ENCODE measurements at regions of chr1 and their contacts with region 1.

Region 1: DNA sequence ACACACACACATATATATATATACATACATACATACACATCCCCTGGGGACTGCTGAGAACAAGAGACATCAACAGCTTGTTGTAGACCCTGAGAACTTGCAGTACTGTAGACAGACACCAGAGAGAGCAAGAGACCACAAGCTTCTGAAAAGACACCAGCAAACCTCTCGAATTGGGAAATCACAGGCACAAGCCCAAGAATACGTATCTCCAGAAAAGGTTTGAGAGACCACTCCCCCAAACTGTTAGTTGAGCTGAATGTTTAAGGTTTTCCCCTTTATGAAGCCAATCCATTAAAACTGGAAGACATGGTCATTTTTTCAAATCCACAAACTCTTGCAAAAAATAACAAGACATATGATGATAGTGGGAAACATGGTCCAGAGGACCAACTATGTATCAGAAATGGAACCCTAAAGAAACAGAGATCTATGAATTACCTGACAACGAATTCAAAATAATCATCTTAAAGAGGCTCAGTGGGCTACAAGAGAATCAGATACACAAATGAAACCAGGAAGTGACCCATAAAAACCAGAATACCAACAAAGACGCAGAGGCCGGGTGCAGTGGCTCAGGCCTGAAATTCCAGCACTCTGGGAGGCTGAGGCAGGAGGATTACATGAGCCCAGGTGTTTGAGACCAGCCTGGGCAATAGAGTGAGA is 45.1 kb downstream of the SLC2A1 start:
- DNase-seq: peak in 11 of 14 experiments; percentile 32 to 88 (median 61)
- ATAC-seq: peak; percentile 98
- H3K4me3 ChIP-seq: no peak overlapping the region
- H3K4me3 Mint-ChIP-seq: no peak overlapping the region
- H3K27ac ChIP-seq: no peak overlapping the region
- H3K27ac Mint-ChIP-seq: no peak overlapping the region
- H3K4me1 ChIP-seq: no peaks in the 10 kb centered on the region
- H3K4me1 Mint-ChIP-seq: peaks cover 4% of the 10 kb centered on the region
- H3K27me3 ChIP-seq: no peaks in the 10 kb centered on the region
- H3K27me3 Mint-ChIP-seq: peaks cover 7% of the 10 kb centered on the region
- CTCF ChIP-seq: peak; percentile 80

Region 2: DNA sequence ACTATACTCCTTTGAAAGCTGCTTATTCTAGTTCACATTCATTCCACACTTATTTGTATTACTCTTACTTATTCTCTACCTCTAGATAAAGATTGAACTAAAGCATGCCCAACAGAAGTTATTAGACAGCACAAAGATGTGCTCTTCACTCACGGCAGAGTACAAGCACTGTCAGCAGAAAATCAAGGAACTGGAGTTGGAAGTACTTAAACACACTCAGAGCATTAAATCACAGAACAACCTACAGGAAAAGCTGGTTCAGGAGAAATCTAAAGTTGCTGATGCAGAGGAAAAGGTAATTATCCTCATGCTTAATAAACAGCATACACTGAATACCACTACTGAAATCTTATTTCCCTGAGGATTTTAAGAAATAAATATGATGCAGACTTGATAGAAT is 336.6 kb before region 1 on chr1:
- CTCF ChIA-PET with region 1: no interaction called
- POLR2A ChIA-PET with region 1: no interaction called
- intact Hi-C with region 1: loop called in 1 of 2 experiments (anchors 5 kb)
- DNase-seq: no peak
- ATAC-seq: no peak
- H3K4me3 ChIP-seq: no peak overlapping the region
- H3K4me3 Mint-ChIP-seq: no peak overlapping the region
- H3K27ac ChIP-seq: no peak overlapping the region
- H3K27ac Mint-ChIP-seq: no peak overlapping the region
- H3K4me1 ChIP-seq: no peaks in the 10 kb centered on the region
- H3K4me1 Mint-ChIP-seq: no peaks in the 10 kb centered on the region
- H3K27me3 ChIP-seq: no peaks in the 10 kb centered on the region
- H3K27me3 Mint-ChIP-seq: no peaks in the 10 kb centered on the region
- CTCF ChIP-seq: no peak

Region 3: GRCh38 chr1:42777852-42778251 is 135.7 kb before region 1 on chr1:
- CTCF ChIA-PET with region 1: interaction called, 9 read pairs
- POLR2A ChIA-PET with region 1: no interaction called
- intact Hi-C with region 1: loop called (anchors 2 to 5 kb)
- DNase-seq: peak in 8 of 14 experiments; percentile 6 to 59 (median 25)
- ATAC-seq: peak; percentile 84
- H3K4me3 ChIP-seq: no peak overlapping the region
- H3K4me3 Mint-ChIP-seq: no peak overlapping the region
- H3K27ac ChIP-seq: no peak overlapping the region
- H3K27ac Mint-ChIP-seq: no peak overlapping the region
- H3K4me1 ChIP-seq: no peaks in the 10 kb centered on the region
- H3K4me1 Mint-ChIP-seq: peaks cover 6% of the 10 kb centered on the region
- H3K27me3 ChIP-seq: no peaks in the 10 kb centered on the region
- H3K27me3 Mint-ChIP-seq: no peaks in the 10 kb centered on the region
- CTCF ChIP-seq: peak; percentile 36

Region 4: DNA sequence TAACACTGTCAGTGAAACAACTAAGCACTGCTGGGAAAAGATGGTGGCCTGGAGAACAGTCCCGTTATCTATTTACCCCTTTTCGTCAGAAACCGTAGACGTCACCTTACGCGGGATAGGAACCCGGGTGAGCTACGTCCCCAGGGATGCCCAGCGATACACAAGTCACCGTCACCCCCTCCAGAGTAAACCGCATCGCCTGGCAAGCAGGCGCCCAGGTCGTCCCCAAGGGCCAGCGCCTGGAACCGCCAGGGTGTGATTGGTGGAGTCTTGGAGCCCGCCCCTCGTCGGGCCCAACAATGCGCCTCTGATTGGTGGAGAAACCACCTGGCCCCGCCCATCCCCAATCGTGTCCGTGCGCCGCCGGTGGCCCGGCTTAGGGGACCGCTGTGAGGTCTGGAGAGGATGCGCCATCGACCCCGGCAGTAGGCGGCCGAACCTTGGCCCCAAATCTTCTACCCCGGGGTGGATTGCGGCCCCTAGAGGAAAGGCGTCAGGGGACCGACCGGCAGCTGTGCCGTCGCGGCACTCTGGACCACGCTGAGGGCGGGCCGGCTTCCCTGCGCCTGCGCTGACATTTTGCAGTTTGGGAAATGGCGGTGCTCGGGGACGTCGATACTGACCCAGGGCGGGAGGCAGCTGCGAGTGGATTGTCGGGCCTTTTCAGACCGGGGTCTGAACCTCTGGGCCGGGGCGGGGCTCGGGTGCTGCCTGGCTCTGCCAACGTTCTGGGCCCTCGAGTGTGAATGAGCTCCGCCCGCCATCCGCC is 10.7 kb after region 1 on chr1:
- CTCF ChIA-PET with region 1: interaction called, 66 read pairs
- POLR2A ChIA-PET with region 1: interaction called, 6 read pairs
- intact Hi-C with region 1: no loop called
- DNase-seq: peak; percentile 81 to 94 (median 88)
- ATAC-seq: peak; percentile 89
- H3K4me3 ChIP-seq: peak overlapping the region; percentile 81
- H3K4me3 Mint-ChIP-seq: peak overlapping the region; percentile 94
- H3K27ac ChIP-seq: peak overlapping the region; percentile 66 to 86
- H3K27ac Mint-ChIP-seq: peak overlapping the region; percentile 84
- H3K4me1 ChIP-seq: peaks cover 22% of the 10 kb centered on the region
- H3K4me1 Mint-ChIP-seq: peaks cover 40% of the 10 kb centered on the region
- H3K27me3 ChIP-seq: no peaks in the 10 kb centered on the region
- H3K27me3 Mint-ChIP-seq: no peaks in the 10 kb centered on the region
- CTCF ChIP-seq: no peak

Region 5: DNA sequence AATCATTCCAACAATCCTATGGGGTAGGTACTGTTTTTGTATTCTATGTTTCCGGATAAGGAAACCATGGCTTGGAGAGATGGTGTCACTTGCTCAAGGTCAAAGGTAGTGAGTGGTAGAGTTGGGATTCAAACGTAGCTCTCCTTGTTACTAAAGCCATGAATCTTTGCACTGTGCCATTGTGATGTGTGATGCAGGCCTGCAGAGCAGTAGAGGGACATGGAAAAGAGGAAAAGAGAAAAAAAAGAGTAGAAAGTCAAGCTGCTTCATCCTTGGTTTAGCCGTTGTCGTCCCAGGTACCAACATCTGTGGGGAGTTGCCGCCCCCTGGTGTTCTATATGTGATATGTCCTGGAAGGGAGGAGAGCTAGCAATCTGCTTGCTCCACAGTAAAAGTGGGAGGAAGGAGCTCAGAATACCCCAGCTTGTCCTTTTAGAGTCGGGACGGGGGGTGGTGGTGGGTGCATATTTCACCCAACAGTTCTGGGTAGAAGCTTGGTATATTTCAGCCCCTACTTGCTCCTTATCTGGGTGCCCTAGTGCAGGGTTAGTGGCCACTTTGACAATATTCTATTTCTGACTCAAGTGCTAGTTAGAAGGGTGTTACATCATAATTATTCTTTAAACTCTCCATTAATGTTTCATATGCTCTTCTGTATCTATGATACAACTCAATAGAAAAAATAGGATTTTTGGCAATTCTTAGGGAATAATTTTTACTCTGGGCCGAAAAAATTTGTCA is 160.1 kb after region 1 on chr1:
- CTCF ChIA-PET with region 1: interaction called, 205 read pairs
- POLR2A ChIA-PET with region 1: interaction called, 47 read pairs
- intact Hi-C with region 1: loop called (anchors 1 kb)
- DNase-seq: peak; percentile 60 to 87 (median 68)
- ATAC-seq: peak; percentile 84
- H3K4me3 ChIP-seq: no peak overlapping the region
- H3K4me3 Mint-ChIP-seq: no peak overlapping the region
- H3K27ac ChIP-seq: no peak overlapping the region
- H3K27ac Mint-ChIP-seq: no peak overlapping the region
- H3K4me1 ChIP-seq: peaks cover 6% of the 10 kb centered on the region
- H3K4me1 Mint-ChIP-seq: peaks cover 15% of the 10 kb centered on the region
- H3K27me3 ChIP-seq: no peaks in the 10 kb centered on the region
- H3K27me3 Mint-ChIP-seq: no peaks in the 10 kb centered on the region
- CTCF ChIP-seq: peak; percentile 82

Region 6: GRCh38 chr1:43227143-43227764 is 313.7 kb after region 1 on chr1:
- CTCF ChIA-PET with region 1: interaction called, 4 read pairs
- POLR2A ChIA-PET with region 1: no interaction called
- intact Hi-C with region 1: loop called (anchors 1 to 5 kb)
- DNase-seq: peak; percentile 73 to 91 (median 84)
- ATAC-seq: peak; percentile 89
- H3K4me3 ChIP-seq: no peak overlapping the region
- H3K4me3 Mint-ChIP-seq: no peak overlapping the region
- H3K27ac ChIP-seq: no peak overlapping the region
- H3K27ac Mint-ChIP-seq: no peak overlapping the region
- H3K4me1 ChIP-seq: peaks cover 3% of the 10 kb centered on the region
- H3K4me1 Mint-ChIP-seq: no peaks in the 10 kb centered on the region
- H3K27me3 ChIP-seq: no peaks in the 10 kb centered on the region
- H3K27me3 Mint-ChIP-seq: no peaks in the 10 kb centered on the region
- CTCF ChIP-seq: peak; percentile 89

Region 7: GRCh38 chr1:43414634-43415223 is 501.2 kb after region 1 on chr1:
- CTCF ChIA-PET with region 1: no interaction called
- POLR2A ChIA-PET with region 1: no interaction called
- intact Hi-C with region 1: loop called in 1 of 2 experiments (anchors 2 kb)
- DNase-seq: peak; percentile 47 to 79 (median 62)
- ATAC-seq: peak; percentile 95
- H3K4me3 ChIP-seq: no peak overlapping the region
- H3K4me3 Mint-ChIP-seq: no peak overlapping the region
- H3K27ac ChIP-seq: no peak overlapping the region
- H3K27ac Mint-ChIP-seq: peak overlapping the region; percentile 0
- H3K4me1 ChIP-seq: no peaks in the 10 kb centered on the region
- H3K4me1 Mint-ChIP-seq: peaks cover 5% of the 10 kb centered on the region
- H3K27me3 ChIP-seq: no peaks in the 10 kb centered on the region
- H3K27me3 Mint-ChIP-seq: no peaks in the 10 kb centered on the region
- CTCF ChIP-seq: peak; percentile 62